Heart left ventricle (tissue), 16 donors: ENCODE measurements at regions of chr20 and their contacts with region 1.

Region 1: GRCh38 chr20:45044084-45044573 is 56.8 kb downstream of the KCNS1 start:
- DNase-seq: peak in 1 of 5 donors; percentile 19
- ATAC-seq: peak in 3 of 4 donors; percentile 64 to 83 (median 66)
- H3K4me3 ChIP-seq: no peak overlapping the region
- H3K27ac ChIP-seq: no peak overlapping the region
- H3K4me1 ChIP-seq: peaks cover 0 to 34% (median 0%) of the 10 kb centered on the region in 12 donors
- H3K27me3 ChIP-seq: no peaks in the 10 kb centered on the region
- CTCF ChIP-seq: peak; percentile 76 to 91 (median 83)
- POLR2A ChIP-seq: no peak

Region 2: GRCh38 chr20:44576297-44576696 is 467.8 kb before region 1 on chr20:
- intact Hi-C with region 1: no loop called
- DNase-seq: peak in 1 of 5 donors; percentile 50
- ATAC-seq: peak in 2 of 4 donors; percentile 16 to 27
- H3K4me3 ChIP-seq: no peak overlapping the region
- H3K27ac ChIP-seq: peak overlapping the region; percentile 6 to 85 (median 62)
- H3K4me1 ChIP-seq: peaks cover 3 to 84% (median 62%) of the 10 kb centered on the region in 12 donors
- H3K27me3 ChIP-seq: no peaks in the 10 kb centered on the region
- CTCF ChIP-seq: peak in 11 of 12 donors; percentile 27 to 68 (median 50)
- POLR2A ChIP-seq: no peak

Region 3: DNA sequence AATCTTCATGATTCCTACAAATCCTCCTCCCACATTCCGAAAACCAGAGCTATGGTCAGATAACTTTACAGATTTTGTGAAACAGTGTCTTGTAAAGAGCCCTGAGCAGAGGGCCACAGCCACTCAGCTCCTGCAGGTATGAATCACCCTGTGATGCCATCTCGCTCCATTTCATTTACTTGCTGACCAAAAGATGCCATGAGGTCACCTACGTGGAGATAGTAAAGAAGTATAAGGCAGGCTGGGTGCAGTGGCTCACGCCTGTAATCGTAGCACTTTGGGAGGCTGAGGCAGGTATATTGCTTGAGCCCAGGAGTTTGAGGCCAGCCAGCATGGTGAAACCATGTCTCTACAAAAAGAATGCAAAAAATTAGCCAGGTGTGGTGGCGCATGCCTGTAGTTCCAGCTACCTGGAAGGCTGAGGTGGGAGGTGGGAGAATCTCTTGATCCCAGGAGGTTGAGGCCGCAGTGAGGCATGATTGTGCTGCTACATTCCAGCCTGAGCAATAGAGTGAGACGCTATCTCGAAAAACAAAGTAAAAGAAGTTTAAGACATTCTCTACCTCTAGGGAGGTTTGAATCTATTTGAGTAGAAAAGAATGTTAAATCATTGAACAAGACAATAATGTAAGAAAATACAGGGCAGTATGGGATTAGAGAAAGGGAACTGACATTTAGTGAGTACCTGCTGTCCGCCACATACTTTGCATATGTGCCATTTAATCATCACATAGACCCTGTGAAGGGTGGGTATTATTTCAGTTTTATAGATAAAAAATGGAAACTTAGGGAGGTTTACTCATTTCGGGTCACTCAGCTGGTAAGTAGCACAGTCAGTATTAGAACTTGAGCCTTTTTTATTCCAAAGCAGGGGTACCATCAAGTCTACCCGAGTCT is 46.7 kb before region 1 on chr20:
- intact Hi-C with region 1: no loop called
- DNase-seq: no peak
- ATAC-seq: no peak
- H3K4me3 ChIP-seq: no peak overlapping the region
- H3K27ac ChIP-seq: no peak overlapping the region
- H3K4me1 ChIP-seq: peaks cover 0 to 22% (median 4%) of the 10 kb centered on the region in 12 donors
- H3K27me3 ChIP-seq: no peaks in the 10 kb centered on the region
- CTCF ChIP-seq: no peak
- POLR2A ChIP-seq: no peak

Region 4: DNA sequence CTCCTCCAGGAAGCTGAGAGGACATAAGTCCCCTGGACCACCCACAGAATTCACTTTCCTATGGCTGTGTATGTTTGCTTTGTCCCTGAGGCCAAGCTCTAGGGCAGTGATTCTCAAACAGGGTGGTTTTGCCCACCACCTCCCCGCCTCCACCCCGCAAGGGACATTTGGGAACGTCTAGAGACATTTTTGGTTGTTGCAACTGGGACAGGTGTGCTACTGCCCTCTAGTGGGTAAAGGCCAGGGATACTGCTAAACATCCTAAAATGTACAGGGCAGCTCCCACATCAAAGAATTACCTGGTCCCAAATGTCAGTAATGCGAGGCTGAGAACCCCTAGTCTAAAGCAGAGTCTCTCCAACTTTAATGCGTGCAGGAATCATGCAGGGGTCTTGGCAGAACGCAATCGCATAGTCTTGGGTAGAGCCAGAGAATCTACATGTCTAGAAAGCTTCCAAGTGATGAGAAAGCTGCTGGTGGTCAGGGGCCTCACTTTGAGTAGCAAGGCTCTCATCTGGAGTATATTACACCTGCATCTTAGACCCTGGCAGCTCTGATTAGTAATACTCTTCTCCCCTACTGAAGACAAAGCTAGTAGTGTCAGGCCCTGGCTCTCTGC is 51.7 kb after region 1 on chr20:
- intact Hi-C with region 1: loop called in 9 of 10 experiments (anchors 1 to 5 kb)
- DNase-seq: peak in 4 of 5 donors; percentile 34 to 50 (median 39)
- ATAC-seq: peak; percentile 18 to 67 (median 50)
- H3K4me3 ChIP-seq: no peak overlapping the region
- H3K27ac ChIP-seq: no peak overlapping the region
- H3K4me1 ChIP-seq: peaks cover 0 to 17% (median 4%) of the 10 kb centered on the region in 12 donors
- H3K27me3 ChIP-seq: peaks cover 20 to 51% (median 33%) of the 10 kb centered on the region in 9 donors
- CTCF ChIP-seq: peak; percentile 54 to 79 (median 70)
- POLR2A ChIP-seq: no peak

Region 5: DNA sequence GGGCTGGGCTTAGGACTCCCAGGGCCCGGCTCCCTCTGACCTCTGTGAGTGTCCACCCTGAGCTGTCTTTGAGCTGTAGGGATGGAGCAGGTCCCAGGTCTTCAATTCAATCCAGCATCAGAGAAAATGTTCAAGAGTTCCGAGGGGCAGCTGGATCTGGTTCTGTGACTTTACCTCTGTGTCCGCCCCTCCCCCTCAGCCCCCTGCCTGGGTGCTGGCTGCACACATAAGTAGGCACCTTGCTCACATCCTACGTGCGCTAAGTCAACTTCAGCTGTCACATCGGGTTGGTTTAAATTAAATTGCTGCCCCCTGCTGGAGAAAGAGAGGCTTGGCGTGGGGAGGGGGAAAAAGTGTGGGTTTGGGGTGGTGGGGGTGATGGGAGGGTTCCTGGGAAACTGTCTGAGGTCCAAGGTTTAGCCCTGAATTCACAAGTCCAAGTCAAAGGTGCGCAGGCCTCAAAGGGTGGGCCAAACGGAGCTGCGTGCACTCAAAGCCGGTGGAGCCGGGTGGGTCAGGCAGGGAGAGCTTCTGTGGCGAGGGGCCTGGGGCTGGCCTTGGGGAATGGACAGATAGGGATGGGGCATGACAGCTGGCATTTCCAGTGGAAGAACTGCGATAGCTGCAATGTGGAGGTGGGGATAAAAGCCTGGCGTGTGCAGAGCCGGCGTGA is 67.8 kb after region 1 on chr20:
- intact Hi-C with region 1: loop called in 1 of 10 experiments (anchors 5 kb)
- DNase-seq: no peak
- ATAC-seq: no peak
- H3K4me3 ChIP-seq: no peak overlapping the region
- H3K27ac ChIP-seq: no peak overlapping the region
- H3K4me1 ChIP-seq: no peaks in the 10 kb centered on the region
- H3K27me3 ChIP-seq: peaks cover 0 to 29% (median 0%) of the 10 kb centered on the region in 9 donors
- CTCF ChIP-seq: peak; percentile 19 to 51 (median 38)
- POLR2A ChIP-seq: no peak

Region 6: DNA sequence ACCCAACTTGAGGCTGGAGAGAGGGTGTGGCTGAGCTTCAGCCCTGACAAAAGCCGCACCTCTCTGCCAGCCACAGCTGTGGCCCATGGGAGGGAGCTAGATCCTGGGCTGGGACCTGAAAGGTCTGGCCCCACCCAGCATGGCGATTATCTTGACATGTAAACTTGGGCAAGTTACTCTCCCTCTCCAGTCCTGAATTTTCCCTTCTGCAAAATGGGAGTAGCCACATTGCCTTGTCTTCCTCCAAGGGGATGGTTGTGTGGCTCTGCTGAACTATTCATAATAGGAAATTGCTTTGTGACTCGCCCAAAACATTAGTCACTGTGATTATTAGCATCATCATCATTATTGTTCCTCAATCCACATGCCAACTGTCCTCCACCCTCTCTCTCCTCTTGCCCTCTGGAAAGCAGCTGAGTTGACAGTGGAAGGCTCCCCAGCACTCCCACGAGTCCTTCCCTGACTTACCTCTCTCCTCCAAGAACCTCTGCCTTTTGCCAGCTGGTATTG is 239.5 kb after region 1 on chr20:
- intact Hi-C with region 1: loop called in 1 of 10 experiments (anchors 10 kb)
- DNase-seq: no peak
- ATAC-seq: no peak
- H3K4me3 ChIP-seq: no peak overlapping the region
- H3K27ac ChIP-seq: no peak overlapping the region
- H3K4me1 ChIP-seq: no peaks in the 10 kb centered on the region
- H3K27me3 ChIP-seq: peaks cover 0 to 39% (median 5%) of the 10 kb centered on the region in 9 donors
- CTCF ChIP-seq: no peak
- POLR2A ChIP-seq: no peak

Region 7: DNA sequence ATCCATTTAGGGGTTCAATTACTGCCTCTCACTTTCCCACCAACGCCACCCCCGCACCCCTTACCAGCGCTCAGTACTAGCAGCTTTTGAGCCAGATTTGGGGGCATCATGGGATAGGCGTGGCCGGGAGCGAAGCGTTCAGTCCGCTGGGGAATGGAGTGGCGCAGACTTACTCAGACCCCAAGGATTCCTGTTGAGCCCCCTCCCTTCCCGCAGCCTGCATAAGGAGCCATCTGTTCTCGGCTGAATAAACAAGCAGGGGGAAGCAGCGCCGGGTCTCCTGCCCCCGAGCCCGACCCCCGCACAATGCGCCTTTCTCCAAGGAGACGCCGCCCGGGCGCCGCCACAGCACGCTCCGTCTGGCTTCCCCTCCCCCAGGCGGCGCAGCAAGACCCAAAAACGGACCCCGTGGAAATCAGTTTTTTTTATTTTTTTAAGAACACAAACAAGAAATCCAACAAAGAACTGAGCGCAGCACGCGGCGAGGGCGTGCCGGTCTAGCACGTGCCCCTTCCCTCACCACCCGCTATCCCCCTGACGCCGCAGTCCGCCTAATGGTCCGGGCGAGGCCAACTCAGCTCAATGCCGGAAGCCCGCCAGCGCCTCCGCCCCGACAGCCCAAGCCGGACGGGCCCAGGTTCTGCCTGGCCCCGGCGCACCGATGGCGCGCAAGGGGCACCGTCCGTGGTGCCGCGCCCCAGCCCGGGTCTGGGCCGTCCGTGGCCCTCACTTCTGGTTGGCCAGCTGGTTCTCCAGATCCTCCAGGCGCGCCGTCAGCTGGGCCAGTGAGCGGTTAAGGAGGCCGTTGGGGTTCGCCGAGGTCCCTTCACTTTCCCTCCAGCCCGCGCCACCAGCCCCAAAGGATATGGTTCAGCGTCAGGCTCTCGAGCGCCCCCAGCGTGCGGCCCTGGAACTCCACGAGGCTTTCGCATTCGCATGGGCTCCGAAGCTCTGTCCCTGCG is 249.2 kb after region 1 on chr20:
- intact Hi-C with region 1: loop called in 6 of 10 experiments (anchors 2 to 10 kb)
- DNase-seq: peak; percentile 61 to 91 (median 81)
- ATAC-seq: peak; percentile 35 to 90 (median 86)
- H3K4me3 ChIP-seq: peak overlapping the region; percentile 19 to 65 (median 52)
- H3K27ac ChIP-seq: no peak overlapping the region
- H3K4me1 ChIP-seq: peaks cover 0 to 19% (median 8%) of the 10 kb centered on the region in 12 donors
- H3K27me3 ChIP-seq: peaks cover 0 to 63% (median 11%) of the 10 kb centered on the region in 9 donors
- CTCF ChIP-seq: peak; percentile 83 to 95 (median 91)
- POLR2A ChIP-seq: no peak